HEK293T (cell line): ENCODE measurements at regions of chr11 and their contacts with region 1.

Region 1: GRCh38 chr11:76152086-76152681 is 54.1 kb downstream of the WNT11 start:
- DNase-seq: peak; percentile 90

Region 2: DNA sequence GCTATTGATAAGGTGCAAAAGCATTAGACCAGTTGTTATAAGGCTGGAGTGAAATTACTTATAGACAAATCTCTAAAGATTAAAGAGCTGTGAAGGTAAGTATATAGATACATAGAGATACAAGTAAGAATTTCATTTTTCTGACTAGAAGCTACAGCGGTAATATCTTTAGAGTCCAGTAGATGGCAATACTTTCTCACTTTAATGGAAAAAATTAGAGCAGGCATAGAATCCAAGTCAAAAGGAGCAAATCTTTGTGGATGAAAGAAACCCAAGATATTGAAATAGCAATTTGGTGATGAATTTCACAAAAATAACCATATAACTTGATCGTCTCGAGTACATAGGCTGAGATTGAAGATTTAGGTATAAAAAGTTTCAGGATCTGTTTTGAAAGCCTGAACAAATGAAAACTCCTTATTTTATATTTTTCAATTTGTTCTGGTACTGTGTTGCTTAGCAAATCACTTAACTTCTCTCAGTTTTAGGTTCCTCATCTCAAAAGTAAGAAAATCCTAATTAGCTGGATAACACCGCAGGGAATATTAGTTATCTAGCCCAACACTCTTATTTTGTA is 255.3 kb before region 1 on chr11:
- CTCF ChIA-PET with region 1: interaction called, 35 read pairs
- POLR2A ChIA-PET with region 1: interaction called, 5 read pairs
- DNase-seq: peak; percentile 28

Region 3: DNA sequence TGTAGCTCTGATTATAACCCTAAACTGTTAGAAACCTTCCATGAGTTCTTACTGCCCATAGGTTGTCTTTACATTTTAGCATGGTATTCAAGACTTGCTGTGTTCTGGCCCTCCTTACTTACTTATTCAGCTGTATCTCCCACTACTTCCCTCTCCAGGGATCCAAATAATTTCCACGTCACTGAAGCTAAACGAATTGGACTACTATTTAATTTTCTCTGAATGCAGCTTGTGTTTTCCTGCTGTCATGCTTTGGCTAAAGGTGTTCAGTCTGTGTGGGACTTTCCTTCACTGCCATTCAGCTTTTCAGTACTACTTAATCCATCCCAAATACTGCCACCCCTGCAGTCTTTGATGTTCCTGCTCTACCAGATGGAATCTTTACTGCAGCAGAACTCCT is 248.9 kb before region 1 on chr11:
- CTCF ChIA-PET with region 1: interaction called, 35 read pairs
- POLR2A ChIA-PET with region 1: no interaction called
- DNase-seq: no peak

Region 4: DNA sequence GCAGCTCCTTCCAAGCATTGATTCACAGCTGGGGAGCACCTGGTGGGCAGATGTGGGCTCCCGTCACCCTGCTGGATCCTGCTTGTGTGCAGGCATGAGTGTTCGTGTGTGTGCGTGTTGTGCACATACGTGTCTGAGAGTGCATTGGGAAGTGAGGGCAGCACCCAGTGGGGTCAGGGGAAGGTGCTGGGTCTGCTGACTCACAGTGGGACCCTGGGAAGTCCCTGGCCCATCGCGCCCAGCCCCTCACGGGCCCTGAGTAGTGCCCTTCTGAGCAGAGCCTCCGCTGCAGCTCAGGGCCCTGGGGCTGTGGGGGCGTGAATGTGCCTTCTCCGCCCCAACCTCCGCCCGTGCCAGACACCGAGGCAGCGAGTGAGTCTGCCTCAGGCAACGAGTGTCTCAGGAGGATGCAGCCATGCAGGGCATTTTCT is 17.3 kb after region 1 on chr11:
- CTCF ChIA-PET with region 1: no interaction called
- POLR2A ChIA-PET with region 1: no interaction called
- DNase-seq: no peak

Region 5: GRCh38 chr11:76214968-76215548 is 62.9 kb after region 1 on chr11:
- CTCF ChIA-PET with region 1: no interaction called
- POLR2A ChIA-PET with region 1: no interaction called
- DNase-seq: no peak